ENCODE measurements at regions of chr5 and their contacts with region 1.

Region 1: DNA sequence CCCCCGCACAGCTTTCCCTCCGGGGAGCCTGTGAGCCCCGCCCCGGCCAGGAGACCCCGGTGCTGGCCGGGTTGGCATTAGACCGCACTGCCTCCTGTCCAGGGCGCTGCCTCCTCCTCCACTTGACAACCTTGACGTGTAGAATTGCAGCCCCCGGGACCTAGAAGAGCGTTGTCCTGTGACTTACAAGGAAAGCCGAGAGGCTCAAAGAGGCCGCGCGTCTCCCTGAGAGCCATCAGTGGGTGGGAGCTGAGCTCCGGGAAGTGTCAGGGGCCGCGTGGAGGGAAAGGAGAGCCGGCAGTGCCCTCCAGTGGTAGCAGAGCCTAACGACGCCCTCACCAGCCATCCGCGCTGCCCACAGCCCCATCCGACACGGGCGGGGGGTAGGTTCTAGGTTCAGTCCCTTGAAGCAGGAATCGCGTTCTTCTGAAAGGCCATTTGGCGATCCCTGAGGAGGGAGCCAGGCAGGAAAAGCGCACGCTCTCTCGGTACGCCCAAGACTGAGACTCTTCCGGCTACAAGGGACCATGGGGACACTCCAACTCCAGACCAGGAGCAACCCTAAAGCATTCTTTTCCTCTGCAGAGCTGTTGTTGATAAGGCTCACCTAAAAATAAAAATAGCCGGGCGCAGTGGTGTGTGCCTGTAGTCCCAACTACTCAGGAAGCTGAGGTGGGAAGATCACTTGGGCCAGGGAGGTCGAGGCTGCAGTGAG is 40.6 kb upstream of the SAP30L start:
- DNase-seq: peak; percentile 69 to 93
- ATAC-seq: peak; percentile 86 to 94
- H3K4me3 ChIP-seq: no peak overlapping the region
- H3K27ac ChIP-seq: peak overlapping the region; percentile 67 to 87
- H3K4me1 ChIP-seq: peaks cover 16% of the 10 kb centered on the region
- CTCF ChIP-seq: peak; percentile 81
- EP300 ChIP-seq: no peak
- POLR2A ChIP-seq: no peak
- RAD21 ChIP-seq: peak; percentile 93 to 97

Region 2: GRCh38 chr5:153974131-153974812 is 431.0 kb before region 1 on chr5:
- CTCF ChIA-PET with region 1: interaction called, 24 read pairs
- POLR2A ChIA-PET with region 1: no interaction called
- DNase-seq: peak; percentile 35 to 56
- ATAC-seq: peak; percentile 65 to 87; a peak in 5 of 6 replicates
- H3K4me3 ChIP-seq: no peak overlapping the region
- H3K27ac ChIP-seq: no peak overlapping the region
- H3K4me1 ChIP-seq: no peaks in the 10 kb centered on the region
- CTCF ChIP-seq: peak; percentile 92
- EP300 ChIP-seq: no peak
- POLR2A ChIP-seq: no peak
- RAD21 ChIP-seq: peak; percentile 90 to 91

Region 3: GRCh38 chr5:154081246-154081645 is 324.0 kb before region 1 on chr5:
- CTCF ChIA-PET with region 1: interaction called, 107 read pairs
- POLR2A ChIA-PET with region 1: no interaction called
- DNase-seq: no peak
- ATAC-seq: no peak
- H3K4me3 ChIP-seq: no peak overlapping the region
- H3K27ac ChIP-seq: no peak overlapping the region
- H3K4me1 ChIP-seq: no peaks in the 10 kb centered on the region
- CTCF ChIP-seq: no peak
- EP300 ChIP-seq: no peak
- POLR2A ChIP-seq: no peak
- RAD21 ChIP-seq: no peak

Region 4: GRCh38 chr5:154189819-154190594 is 215.2 kb before region 1 on chr5:
- CTCF ChIA-PET with region 1: interaction called, 40 read pairs
- POLR2A ChIA-PET with region 1: interaction called, 18 read pairs
- DNase-seq: peak; percentile 83 to 91
- ATAC-seq: peak; percentile 88 to 92
- H3K4me3 ChIP-seq: peak overlapping the region; percentile 65
- H3K27ac ChIP-seq: peak overlapping the region; percentile 96 to 99
- H3K4me1 ChIP-seq: peaks cover 43% of the 10 kb centered on the region
- CTCF ChIP-seq: peak; percentile 44
- EP300 ChIP-seq: no peak
- POLR2A ChIP-seq: peak; percentile 52
- RAD21 ChIP-seq: peak; percentile 31 to 53; a peak in 3 of 5 replicates

Region 5: GRCh38 chr5:154221371-154221896 is 183.8 kb before region 1 on chr5:
- CTCF ChIA-PET with region 1: no interaction called
- POLR2A ChIA-PET with region 1: no interaction called
- DNase-seq: no peak
- ATAC-seq: peak in 1 of 2 experiments; percentile 30; a peak in 3 of 6 replicates
- H3K4me3 ChIP-seq: no peak overlapping the region
- H3K27ac ChIP-seq: peak overlapping the region; percentile 58 to 80
- H3K4me1 ChIP-seq: peaks cover 41% of the 10 kb centered on the region
- CTCF ChIP-seq: no peak
- EP300 ChIP-seq: no peak
- POLR2A ChIP-seq: no peak
- RAD21 ChIP-seq: no peak

Region 6: DNA sequence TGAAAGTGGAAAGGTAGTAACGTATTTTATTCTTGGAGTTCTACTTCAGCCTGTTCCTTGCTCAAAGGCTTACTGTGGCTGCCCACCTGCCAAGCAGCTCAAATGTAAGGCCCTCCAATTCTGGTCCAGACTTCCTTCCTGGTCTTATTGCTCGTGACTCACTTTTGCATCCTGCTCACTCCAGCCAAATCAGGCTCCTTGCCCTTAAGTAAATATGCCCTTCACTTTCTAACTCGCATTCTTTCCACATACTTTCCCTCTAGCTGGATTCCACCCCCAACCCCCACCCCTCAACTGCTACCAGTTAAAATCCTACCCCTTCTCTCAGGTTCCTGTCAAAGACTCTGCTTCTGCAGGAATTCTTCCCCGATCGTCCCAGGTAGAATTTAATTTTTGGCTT is 118.1 kb before region 1 on chr5:
- CTCF ChIA-PET with region 1: interaction called, 15 read pairs
- POLR2A ChIA-PET with region 1: no interaction called
- DNase-seq: peak; percentile 68 to 88
- ATAC-seq: peak; percentile 71 to 83
- H3K4me3 ChIP-seq: peak overlapping the region; percentile 37
- H3K27ac ChIP-seq: peak overlapping the region; percentile 97
- H3K4me1 ChIP-seq: peaks cover 85% of the 10 kb centered on the region
- CTCF ChIP-seq: no peak
- EP300 ChIP-seq: peak; percentile 87 to 92; a peak in 3 of 5 replicates
- POLR2A ChIP-seq: no peak
- RAD21 ChIP-seq: peak; percentile 37 to 66

Region 7: GRCh38 chr5:154384480-154385235 is 20.6 kb before region 1 on chr5:
- CTCF ChIA-PET with region 1: interaction called, 23 read pairs
- POLR2A ChIA-PET with region 1: no interaction called
- DNase-seq: no peak
- ATAC-seq: peak; percentile 13 to 36; a peak in 2 of 6 replicates
- H3K4me3 ChIP-seq: no peak overlapping the region
- H3K27ac ChIP-seq: peak overlapping the region in 1 of 2 experiments; percentile 19; a peak in 2 of 6 replicates
- H3K4me1 ChIP-seq: peaks cover 28% of the 10 kb centered on the region; the same call in 2 of the 3 replicates
- CTCF ChIP-seq: no peak
- EP300 ChIP-seq: no peak
- POLR2A ChIP-seq: no peak
- RAD21 ChIP-seq: no peak

Region 8: GRCh38 chr5:154467655-154468354 is 62.6 kb after region 1 on chr5:
- CTCF ChIA-PET with region 1: no interaction called
- POLR2A ChIA-PET with region 1: no interaction called
- DNase-seq: peak; percentile 65 to 94
- ATAC-seq: peak; percentile 94 to 98
- H3K4me3 ChIP-seq: no peak overlapping the region
- H3K27ac ChIP-seq: no peak overlapping the region
- H3K4me1 ChIP-seq: peaks cover 29% of the 10 kb centered on the region
- CTCF ChIP-seq: peak; percentile 93
- EP300 ChIP-seq: no peak
- POLR2A ChIP-seq: no peak
- RAD21 ChIP-seq: peak; percentile 87 to 93